Mammary epithelial cell (primary cell): ENCODE measurements at regions of chr22 and their contacts with region 1.

Region 1: GRCh38 chr22:37051391-37052385 is at the start of gene KCTD17:
- DNase-seq: peak; percentile 53
- H3K4me3 ChIP-seq: peak within 1 kb of the TSS; percentile 56 to 67 (median 61)
- H3K27ac ChIP-seq: no peak within 1 kb of the TSS
- H3K4me1 ChIP-seq: peaks cover 5% of the 10 kb centered on the region
- H3K27me3 ChIP-seq: no peaks in the 10 kb centered on the region
- CTCF ChIP-seq: no peak
- total RNA-seq, gene KCTD17: 19.2 to 25.9 TPM

Region 2: GRCh38 chr22:36775964-36776669 is 275.6 kb before region 1 on chr22 and contains the start of gene IFT27:
- CTCF ChIA-PET with region 1: no interaction called
- dilution Hi-C with region 1: loop called (anchors 5 kb)
- in situ Hi-C with region 1: no loop called
- intact Hi-C with region 1: no loop called
- DNase-seq: peak; percentile 100
- H3K4me3 ChIP-seq: peak within 1 kb of the TSS; percentile 72 to 85 (median 80)
- H3K27ac ChIP-seq: peak within 1 kb of the TSS; percentile 42
- H3K4me1 ChIP-seq: peaks cover 11% of the 10 kb centered on the region
- H3K27me3 ChIP-seq: no peaks in the 10 kb centered on the region
- CTCF ChIP-seq: no peak
- total RNA-seq, gene IFT27: 13.7 to 22.3 TPM

Region 3: DNA sequence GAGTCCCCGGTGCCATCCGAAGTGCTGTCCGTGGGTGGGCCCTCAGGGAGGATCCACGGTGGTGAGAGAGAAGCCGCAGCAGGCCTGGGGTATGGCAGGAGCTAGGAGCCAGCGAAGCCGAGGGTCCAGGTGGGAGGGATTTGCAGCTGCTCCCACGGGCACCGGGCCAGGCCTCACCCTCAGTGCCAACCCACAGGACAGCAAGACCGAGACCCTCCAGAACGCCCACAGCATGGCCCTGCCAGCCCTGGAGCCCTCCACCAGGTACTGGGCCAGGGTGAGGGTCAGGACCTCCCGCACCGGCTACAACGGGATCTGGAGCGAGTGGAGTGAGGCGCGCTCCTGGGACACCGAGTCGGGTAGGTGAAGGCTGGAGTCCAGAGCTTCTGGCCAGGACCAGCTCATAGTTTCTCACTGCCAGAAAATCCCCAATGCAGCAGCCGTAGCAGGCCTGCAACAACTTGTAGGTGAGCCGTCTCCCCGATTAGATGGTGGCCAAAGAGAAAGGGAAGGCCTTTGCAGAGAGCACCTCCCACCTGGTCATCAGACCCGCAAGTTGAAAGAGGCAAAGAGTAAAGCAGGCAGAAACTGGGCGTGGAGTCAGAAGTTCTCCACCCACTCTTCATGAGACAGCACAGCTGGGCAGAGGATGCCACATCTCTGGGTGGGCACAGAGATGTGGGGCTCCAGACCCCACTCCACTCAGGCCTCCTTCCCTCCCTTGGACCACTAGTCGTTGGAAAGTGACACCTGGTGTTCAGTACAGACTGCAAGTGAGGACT is 117.9 kb before region 1 on chr22:
- CTCF ChIA-PET with region 1: no interaction called
- dilution Hi-C with region 1: loop called (anchors 5 kb)
- in situ Hi-C with region 1: no loop called
- intact Hi-C with region 1: no loop called
- DNase-seq: peak; percentile 32
- H3K4me3 ChIP-seq: no peak overlapping the region
- H3K27ac ChIP-seq: no peak overlapping the region
- H3K4me1 ChIP-seq: no peaks in the 10 kb centered on the region
- H3K27me3 ChIP-seq: no peaks in the 10 kb centered on the region
- CTCF ChIP-seq: no peak

Region 4: GRCh38 chr22:37154925-37155712 is 103.4 kb after region 1 on chr22:
- CTCF ChIA-PET with region 1: no interaction called
- dilution Hi-C with region 1: loop called (anchors 5 kb)
- in situ Hi-C with region 1: no loop called
- intact Hi-C with region 1: no loop called
- DNase-seq: peak; percentile 12
- H3K4me3 ChIP-seq: no peak overlapping the region
- H3K27ac ChIP-seq: no peak overlapping the region
- H3K4me1 ChIP-seq: no peaks in the 10 kb centered on the region
- H3K27me3 ChIP-seq: no peaks in the 10 kb centered on the region
- CTCF ChIP-seq: no peak

Region 5: DNA sequence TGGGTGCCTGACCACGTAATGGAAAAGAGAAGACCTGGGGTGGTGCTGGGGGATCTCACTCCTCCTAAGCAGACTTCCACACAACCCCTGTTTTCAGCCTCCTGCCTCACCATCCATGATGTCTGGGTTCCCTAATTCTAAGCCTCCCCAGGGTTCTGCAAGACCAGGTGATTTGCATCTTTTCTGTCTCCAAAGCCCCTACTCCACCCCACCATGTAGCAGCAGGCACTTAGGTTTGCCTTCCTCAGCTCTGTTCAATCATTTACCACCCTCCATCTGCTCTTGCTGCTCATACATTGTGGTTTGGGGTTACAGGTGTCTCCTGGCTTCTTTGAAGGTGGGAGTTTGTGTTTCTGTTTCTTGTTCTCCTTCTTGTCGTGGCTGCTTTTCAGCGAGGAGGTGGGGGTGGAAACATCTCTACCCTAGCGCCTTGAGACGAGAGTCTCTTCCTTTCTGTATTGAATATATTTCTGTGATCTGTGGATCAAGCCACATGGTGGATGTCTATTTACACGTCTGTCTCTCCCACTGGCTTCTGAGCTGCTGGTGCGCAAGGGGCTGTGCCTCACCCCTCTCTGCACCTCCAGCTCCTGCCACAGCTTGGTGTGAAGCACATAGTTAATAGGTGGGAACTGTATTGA is 167.2 kb after region 1 on chr22:
- CTCF ChIA-PET with region 1: no interaction called
- dilution Hi-C with region 1: loop called (anchors 10 kb)
- in situ Hi-C with region 1: no loop called
- intact Hi-C with region 1: no loop called
- DNase-seq: no peak
- H3K4me3 ChIP-seq: no peak overlapping the region
- H3K27ac ChIP-seq: no peak overlapping the region
- H3K4me1 ChIP-seq: no peaks in the 10 kb centered on the region
- H3K27me3 ChIP-seq: no peaks in the 10 kb centered on the region
- CTCF ChIP-seq: no peak

Region 6: DNA sequence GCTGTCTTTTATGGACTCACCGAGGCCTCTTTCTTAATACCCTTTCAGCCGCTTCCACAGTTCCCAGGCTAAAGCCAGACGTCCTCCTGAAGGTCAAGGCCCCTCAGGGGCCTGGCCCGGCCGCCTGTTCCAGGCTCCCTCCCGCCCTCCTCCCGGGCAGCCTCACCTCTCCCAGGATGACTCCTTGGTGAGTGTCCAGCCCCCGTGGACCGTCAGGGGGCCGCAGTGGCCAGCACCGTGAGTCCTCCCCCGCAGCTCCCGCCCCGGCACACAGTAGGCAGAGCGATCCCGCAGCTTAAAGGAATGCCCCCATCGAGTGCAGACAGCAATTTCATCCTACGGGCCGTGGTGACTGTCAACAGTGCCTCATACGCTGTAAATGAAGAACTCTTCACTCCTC is 342.7 kb after region 1 on chr22:
- CTCF ChIA-PET with region 1: no interaction called
- dilution Hi-C with region 1: loop called (anchors 10 kb)
- in situ Hi-C with region 1: no loop called
- intact Hi-C with region 1: no loop called
- DNase-seq: no peak
- H3K4me3 ChIP-seq: no peak overlapping the region
- H3K27ac ChIP-seq: no peak overlapping the region
- H3K4me1 ChIP-seq: no peaks in the 10 kb centered on the region
- H3K27me3 ChIP-seq: no peaks in the 10 kb centered on the region
- CTCF ChIP-seq: no peak